Endothelial cell of umbilical vein (primary cell): ENCODE measurements at regions of chr2 and their contacts with region 1.

Region 1: GRCh38 chr2:226333388-226333787 is 466.2 kb downstream of the IRS1 start:
- DNase-seq: peak; percentile 12
- H3K4me3 ChIP-seq: no peak overlapping the region
- H3K27ac ChIP-seq: no peak overlapping the region
- H3K4me1 ChIP-seq: no peaks in the 10 kb centered on the region
- H3K27me3 ChIP-seq: no peaks in the 10 kb centered on the region
- CTCF ChIP-seq: no peak
- POLR2A ChIP-seq: no peak

Region 2: DNA sequence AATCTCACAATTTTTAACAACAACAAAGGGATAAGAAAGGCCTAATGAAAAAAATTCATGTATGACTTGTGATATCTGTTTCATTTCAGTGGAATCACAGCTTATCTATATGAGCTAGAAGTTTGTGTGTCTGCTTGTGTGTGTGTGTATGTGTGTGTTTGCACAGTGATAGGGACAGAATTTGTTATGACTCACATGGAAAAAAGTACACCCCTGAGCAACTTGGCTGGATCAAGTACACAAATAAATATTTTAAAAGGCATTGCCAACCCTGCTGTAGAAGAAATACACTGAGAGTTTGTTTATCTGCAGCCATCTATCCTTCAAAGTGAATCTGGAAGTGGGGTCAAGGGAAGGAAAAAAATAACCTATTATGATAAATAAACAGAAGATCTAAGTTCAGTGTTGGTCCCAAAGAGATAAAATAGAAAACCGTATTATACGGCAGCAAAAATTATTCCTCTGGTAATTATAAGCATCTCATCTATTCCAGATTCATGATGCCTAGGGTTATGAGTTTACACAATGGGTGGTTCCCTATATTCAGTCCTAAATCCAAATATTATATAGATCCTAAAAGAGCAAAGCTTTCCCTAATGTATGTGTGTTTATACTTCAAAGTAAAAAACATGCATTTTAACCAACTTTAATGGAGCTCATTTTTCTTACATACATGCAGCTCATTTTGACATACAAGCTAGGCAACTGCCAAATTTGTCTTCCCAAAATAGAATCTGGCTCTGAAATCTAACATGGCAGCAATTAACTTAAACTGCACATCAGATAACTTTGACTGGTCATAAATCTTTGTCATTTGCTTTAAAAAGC is 45.6 kb after region 1 on chr2:
- CTCF ChIA-PET with region 1: no interaction called
- POLR2A ChIA-PET with region 1: no interaction called
- dilution Hi-C with region 1: no loop called
- intact Hi-C with region 1: loop called (anchors 1 kb)
- DNase-seq: no peak
- H3K4me3 ChIP-seq: no peak overlapping the region
- H3K27ac ChIP-seq: no peak overlapping the region
- H3K4me1 ChIP-seq: peaks cover 8% of the 10 kb centered on the region
- H3K27me3 ChIP-seq: no peaks in the 10 kb centered on the region
- CTCF ChIP-seq: no peak
- POLR2A ChIP-seq: no peak